PC-3 (cell line): ENCODE measurements at regions of chr1 and their contacts with region 1.

Region 1: DNA sequence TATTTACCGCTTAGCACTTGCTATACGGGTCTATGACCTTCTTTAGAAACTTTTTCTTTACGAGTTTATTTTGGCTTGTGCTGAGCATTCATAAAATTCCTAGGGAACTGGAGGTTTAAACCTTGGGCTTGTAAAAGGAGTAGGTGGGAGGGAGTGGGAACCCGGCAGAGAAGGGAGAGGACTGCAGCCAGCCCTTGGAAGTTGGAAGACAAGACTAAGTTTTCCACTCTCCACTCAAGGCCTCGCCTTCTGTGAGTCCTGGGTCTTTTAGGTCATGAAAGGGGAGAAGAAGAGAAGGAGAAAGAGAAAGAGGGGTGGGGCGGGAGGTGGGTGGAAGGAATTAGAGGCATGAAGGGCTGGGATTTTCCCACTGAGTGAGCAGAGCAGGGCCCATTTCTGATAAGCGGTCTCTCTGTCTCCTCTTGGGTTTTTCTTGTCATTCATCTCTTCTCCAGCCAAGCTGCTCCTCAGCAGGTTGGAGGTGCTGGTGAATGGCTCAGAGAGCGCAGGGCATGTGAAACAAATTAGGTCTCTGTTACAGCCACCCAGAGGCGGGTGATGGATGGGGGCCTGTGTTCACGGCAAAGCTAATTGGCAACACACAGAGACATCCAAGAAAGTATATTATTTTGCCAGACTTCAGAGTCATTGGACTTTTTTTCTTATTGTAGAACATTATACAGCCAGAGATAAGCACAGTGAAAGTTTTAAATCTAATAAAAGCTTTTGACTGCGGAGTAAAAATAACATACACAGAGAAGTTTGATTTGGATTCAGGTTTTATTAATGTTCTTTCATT is 247.3 kb downstream of the FOXD2 start:
- DNase-seq: peak; percentile 72
- ATAC-seq: peak; percentile 88
- H3K4me3 ChIP-seq: no peak overlapping the region
- H3K27ac ChIP-seq: no peak overlapping the region
- H3K4me1 ChIP-seq: peaks cover 11% of the 10 kb centered on the region; the same call in 1 of the 2 replicates
- H3K27me3 ChIP-seq: no peaks in the 10 kb centered on the region
- CTCF ChIP-seq: no peak

Region 2: DNA sequence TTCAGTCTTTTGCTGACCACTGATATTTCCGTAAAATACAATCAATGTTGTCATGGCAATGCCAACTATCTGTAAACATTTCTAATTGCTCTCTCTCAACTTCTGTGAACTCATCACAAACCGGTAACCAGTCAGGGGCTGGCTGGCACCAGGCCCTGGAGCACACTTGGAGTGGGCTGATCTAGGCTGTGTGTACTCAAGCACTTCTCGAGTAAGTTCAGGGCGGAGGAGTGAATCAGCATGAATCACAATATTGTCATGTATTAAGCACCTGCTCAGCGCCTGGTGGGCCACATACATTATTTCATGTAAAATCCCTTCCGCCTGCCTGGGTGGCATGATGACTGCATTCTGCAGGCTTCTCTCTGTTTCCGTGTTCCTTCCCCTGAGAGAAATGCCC is 35.0 kb before region 1 on chr1:
- CTCF ChIA-PET with region 1: no interaction called
- POLR2A ChIA-PET with region 1: no interaction called
- intact Hi-C with region 1: loop called (anchors 2 kb)
- DNase-seq: peak; percentile 99
- ATAC-seq: peak; percentile 98
- H3K4me3 ChIP-seq: no peak overlapping the region
- H3K27ac ChIP-seq: peak overlapping the region; percentile 65
- H3K4me1 ChIP-seq: peaks cover 22% of the 10 kb centered on the region
- H3K27me3 ChIP-seq: no peaks in the 10 kb centered on the region
- CTCF ChIP-seq: no peak

Region 3: GRCh38 chr1:47814612-47815395 is 129.6 kb after region 1 on chr1:
- CTCF ChIA-PET with region 1: no interaction called
- POLR2A ChIA-PET with region 1: no interaction called
- intact Hi-C with region 1: no loop called
- DNase-seq: no peak
- ATAC-seq: no peak
- H3K4me3 ChIP-seq: no peak overlapping the region
- H3K27ac ChIP-seq: no peak overlapping the region
- H3K4me1 ChIP-seq: peaks cover 9% of the 10 kb centered on the region
- H3K27me3 ChIP-seq: no peaks in the 10 kb centered on the region
- CTCF ChIP-seq: no peak